ENCODE measurements at regions of chr2 and their contacts with region 1.

Region 1: DNA sequence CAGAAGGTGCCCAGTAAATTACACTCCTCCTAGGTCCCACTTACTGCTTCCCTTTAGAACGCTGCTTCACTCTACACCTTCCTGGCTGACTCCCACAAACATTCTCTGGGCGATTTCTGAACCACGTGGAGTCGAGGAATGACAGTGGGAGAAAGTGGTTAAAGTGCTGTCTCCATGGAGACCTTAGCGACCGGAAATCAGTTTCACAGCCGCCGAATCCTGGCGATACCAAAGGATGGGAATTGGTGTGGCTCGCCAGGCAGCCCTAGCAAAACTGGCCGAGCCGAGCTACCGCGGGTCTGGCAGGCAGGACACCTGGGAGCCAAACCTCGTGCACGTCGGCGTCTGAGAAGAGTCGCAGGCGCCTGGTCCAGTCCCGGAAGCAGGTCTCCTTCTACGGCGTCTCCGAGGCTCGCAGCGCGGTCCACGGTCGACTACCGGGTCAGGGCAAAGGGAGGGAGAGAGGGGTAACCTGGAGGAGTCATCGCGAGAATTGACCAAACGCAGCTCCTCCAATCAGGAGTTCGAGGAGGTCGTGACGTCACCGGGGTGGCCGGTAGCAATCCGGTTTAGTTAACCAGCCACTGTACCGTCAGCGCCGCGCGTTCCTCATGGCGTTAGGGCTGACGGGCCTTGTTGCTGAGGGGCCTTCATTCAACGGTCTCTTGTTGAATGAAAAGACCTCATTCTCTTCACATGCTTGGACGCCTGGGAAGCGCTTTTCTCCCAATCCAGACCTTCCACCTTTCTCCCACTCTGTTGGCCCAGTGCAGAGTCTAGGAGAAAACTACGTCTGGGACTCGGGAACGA is at the start of gene THADA:
- DNase-seq: peak; percentile 99
- H3K4me3 Mint-ChIP-seq: peak within 1 kb of the TSS; percentile 98
- H3K27ac Mint-ChIP-seq: peak within 1 kb of the TSS; percentile 95
- H3K4me1 Mint-ChIP-seq: peaks cover 28% of the 10 kb centered on the region
- H3K27me3 Mint-ChIP-seq: no peaks in the 10 kb centered on the region
- total RNA-seq, gene THADA: 39.0 to 46.6 TPM

Region 2: GRCh38 chr2:43569921-43570320 is 25.9 kb before region 1 on chr2:
- CTCF ChIA-PET with region 1: interaction called, 4 read pairs
- POLR2A ChIA-PET with region 1: interaction called, 5 read pairs
- intact Hi-C with region 1: loop called (anchors 1 kb)
- DNase-seq: peak; percentile 58
- H3K4me3 Mint-ChIP-seq: peak overlapping the region; percentile 58
- H3K27ac Mint-ChIP-seq: peak overlapping the region; percentile 92
- H3K4me1 Mint-ChIP-seq: peaks cover 73% of the 10 kb centered on the region
- H3K27me3 Mint-ChIP-seq: no peaks in the 10 kb centered on the region

Region 3: DNA sequence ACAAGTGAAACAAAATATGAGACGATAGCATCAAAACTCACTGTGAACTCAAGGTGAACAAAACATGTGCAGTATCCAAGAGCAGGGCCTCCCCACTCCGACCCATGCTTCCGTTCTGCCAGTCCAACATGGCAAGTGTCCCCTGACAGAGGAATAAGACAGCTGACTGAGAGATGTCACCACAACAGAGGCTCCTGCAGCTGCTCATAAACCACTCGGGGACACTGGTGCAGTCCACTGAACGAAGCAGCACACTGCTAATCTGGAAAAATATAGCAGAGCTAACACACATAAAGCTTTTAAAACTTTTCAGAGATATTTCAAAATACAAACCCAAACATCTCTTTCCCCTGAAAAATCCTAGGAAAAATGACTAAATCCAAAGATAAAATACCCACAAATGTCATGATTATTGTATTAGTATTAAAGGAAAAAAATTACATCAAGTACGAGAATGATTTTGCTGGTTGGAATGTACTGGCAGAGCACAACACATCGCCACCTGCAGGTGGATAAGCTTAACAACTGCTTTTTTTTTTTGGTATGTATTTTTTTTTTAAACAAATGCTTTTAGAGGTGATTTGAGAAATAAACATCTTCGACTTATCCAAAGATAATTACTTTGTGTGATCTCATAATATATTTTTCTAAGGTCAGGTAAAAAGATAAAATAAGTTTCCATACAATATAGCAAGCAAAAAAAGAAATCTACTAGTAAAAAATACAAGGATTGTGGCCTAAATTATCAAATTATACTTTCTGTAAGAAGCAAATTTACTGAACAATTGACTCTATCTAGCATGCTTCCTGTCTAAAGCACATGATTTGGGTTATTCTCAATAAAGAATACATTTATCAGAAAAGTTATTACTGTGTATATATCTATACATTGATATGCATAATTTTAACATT is 18.6 kb before region 1 on chr2:
- CTCF ChIA-PET with region 1: interaction called, 20 read pairs
- POLR2A ChIA-PET with region 1: interaction called, 5 read pairs
- intact Hi-C with region 1: loop called (anchors 2 kb)
- DNase-seq: no peak
- H3K4me3 Mint-ChIP-seq: no peak overlapping the region
- H3K27ac Mint-ChIP-seq: no peak overlapping the region
- H3K4me1 Mint-ChIP-seq: peaks cover 41% of the 10 kb centered on the region
- H3K27me3 Mint-ChIP-seq: no peaks in the 10 kb centered on the region

Region 4: GRCh38 chr2:43611987-43612894 is 16.4 kb after region 1 on chr2:
- CTCF ChIA-PET with region 1: interaction called, 19 read pairs
- POLR2A ChIA-PET with region 1: interaction called, 3 read pairs
- intact Hi-C with region 1: no loop called
- DNase-seq: peak; percentile 83
- H3K4me3 Mint-ChIP-seq: no peak overlapping the region
- H3K27ac Mint-ChIP-seq: no peak overlapping the region
- H3K4me1 Mint-ChIP-seq: no peaks in the 10 kb centered on the region
- H3K27me3 Mint-ChIP-seq: peaks cover 2% of the 10 kb centered on the region

Region 5: DNA sequence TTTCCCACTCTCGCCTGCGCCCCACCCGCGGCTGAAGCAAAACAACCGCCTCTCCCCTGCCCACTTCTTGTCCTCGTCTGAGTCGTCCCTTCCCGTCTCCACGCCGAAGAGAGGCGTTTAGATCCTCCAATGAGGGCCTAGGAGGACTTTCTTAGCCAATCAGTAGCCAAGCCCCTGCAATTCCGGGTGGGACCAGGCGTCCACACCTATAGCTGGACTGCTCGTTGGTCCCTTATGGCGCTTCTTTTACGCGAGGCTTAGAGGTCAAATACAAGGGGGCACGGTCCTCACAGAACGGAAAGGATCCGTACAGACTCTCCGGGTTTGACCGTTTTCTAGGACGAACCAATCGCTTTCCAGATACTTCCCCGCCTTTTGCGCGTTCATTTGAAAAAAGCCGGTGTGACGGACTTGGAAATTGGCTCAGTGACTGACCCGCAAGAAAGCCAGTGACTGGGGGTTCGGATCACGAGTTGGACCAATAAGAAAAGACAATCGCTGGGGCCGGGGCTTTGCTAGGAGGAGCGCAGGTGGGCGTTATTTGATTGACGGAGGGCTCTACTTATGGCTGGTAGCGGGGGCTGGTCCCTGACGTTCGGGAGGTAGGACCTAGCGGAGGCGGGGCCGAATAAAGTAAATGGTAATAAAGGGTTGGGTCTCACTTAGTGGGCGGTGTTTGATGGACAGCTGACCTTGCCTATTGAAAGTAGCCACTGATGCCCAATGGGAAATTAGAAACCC is 572.3 kb after region 1 on chr2:
- CTCF ChIA-PET with region 1: no interaction called
- POLR2A ChIA-PET with region 1: no interaction called
- intact Hi-C with region 1: loop called (anchors 5 kb)
- DNase-seq: peak; percentile 98
- H3K4me3 Mint-ChIP-seq: peak overlapping the region; percentile 87
- H3K27ac Mint-ChIP-seq: peak overlapping the region; percentile 99
- H3K4me1 Mint-ChIP-seq: peaks cover 34% of the 10 kb centered on the region
- H3K27me3 Mint-ChIP-seq: no peaks in the 10 kb centered on the region

Region 6: GRCh38 chr2:44361330-44362206 is 765.8 kb after region 1 on chr2 and contains the starts of genes CAMKMT and PREPL:
- CTCF ChIA-PET with region 1: no interaction called
- POLR2A ChIA-PET with region 1: no interaction called
- intact Hi-C with region 1: loop called (anchors 5 kb)
- DNase-seq: peak; percentile 99
- H3K4me3 Mint-ChIP-seq: peak within 1 kb of the TSS; percentile 96
- H3K27ac Mint-ChIP-seq: peak within 1 kb of the TSS; percentile 99
- H3K4me1 Mint-ChIP-seq: peaks cover 48% of the 10 kb centered on the region
- H3K27me3 Mint-ChIP-seq: no peaks in the 10 kb centered on the region
- total RNA-seq, gene CAMKMT: 9.3 to 11.3 TPM
- total RNA-seq, gene PREPL: 25.2 to 32.1 TPM

Measured in activated CD4-positive, alpha-beta memory T cell treated with anti-CD3 and anti-CD28 coated beads for 36 hours (primary cell).